IMR-90 (cell line): ENCODE measurements at regions of chr2 and their contacts with region 1.

Region 1: GRCh38 chr2:169109502-169110409 is 40.4 kb downstream of the DHRS9 start:
- DNase-seq: peak; percentile 62
- ATAC-seq: peak; percentile 84
- H3K4me3 ChIP-seq: no peak overlapping the region
- H3K27ac ChIP-seq: no peak overlapping the region
- H3K4me1 ChIP-seq: no peaks in the 10 kb centered on the region
- H3K27me3 ChIP-seq: no peaks in the 10 kb centered on the region
- CTCF ChIP-seq: peak; percentile 80
- POLR2A ChIP-seq: no peak
- RAD21 ChIP-seq: peak; percentile 69

Region 2: DNA sequence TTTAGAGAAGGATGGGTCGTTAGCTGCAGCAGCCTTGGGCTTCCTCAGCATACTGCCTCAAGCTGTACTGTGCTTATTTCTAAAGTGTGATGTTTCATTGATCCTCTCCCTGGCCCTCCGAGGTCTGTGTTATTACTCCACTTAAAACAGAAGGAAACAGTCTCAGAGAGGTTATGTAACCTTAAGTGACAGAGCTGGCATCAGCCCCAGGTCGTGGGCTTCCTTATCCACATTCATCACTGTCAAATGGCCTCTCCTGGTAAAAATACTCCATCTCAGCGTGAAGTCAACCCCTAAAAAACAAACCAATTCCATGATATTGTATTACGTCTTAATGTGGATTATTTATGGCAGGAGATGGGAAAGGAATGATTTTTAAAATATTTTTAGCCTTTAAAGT is 460.7 kb before region 1 on chr2:
- CTCF ChIA-PET with region 1: no interaction called
- POLR2A ChIA-PET with region 1: no interaction called
- dilution Hi-C with region 1: no loop called
- in situ Hi-C with region 1: no loop called
- intact Hi-C with region 1: no loop called
- DNase-seq: no peak
- ATAC-seq: no peak
- H3K4me3 ChIP-seq: no peak overlapping the region
- H3K27ac ChIP-seq: no peak overlapping the region
- H3K4me1 ChIP-seq: no peaks in the 10 kb centered on the region; the same call in 1 of the 2 replicates
- H3K27me3 ChIP-seq: no peaks in the 10 kb centered on the region
- CTCF ChIP-seq: no peak
- POLR2A ChIP-seq: no peak
- RAD21 ChIP-seq: no peak

Region 3: DNA sequence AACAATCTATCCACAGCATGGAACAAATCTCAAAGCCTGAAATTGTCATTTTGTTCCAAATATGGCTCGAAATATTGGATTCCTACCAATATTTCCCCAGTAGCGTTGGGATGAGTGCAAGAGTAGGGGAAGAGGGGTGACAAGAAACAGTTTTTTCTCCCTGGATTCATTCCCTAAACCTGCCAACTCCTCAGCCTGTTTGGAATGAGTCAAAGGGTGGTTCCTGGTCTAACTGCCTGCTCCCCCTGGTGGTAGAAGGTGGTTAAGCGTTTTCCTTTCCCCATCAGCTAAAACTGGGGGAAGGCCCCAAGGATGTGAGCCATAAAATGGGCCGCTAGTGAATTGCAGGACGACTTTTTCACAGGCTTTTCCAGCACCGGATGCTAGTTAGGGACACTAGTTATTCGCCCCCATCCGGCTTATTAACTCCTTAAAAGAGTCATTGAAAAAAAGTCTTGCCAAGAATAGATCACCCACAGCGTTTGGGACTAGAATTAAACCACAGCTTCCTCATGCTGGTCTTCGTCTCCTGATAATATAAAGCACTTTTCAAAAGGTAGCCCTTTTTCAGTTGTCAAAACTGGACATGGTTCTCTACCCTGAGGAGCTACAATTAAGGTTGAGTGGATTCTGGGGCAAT is 32.1 kb after region 1 on chr2:
- CTCF ChIA-PET with region 1: interaction called, 8 read pairs
- POLR2A ChIA-PET with region 1: no interaction called
- dilution Hi-C with region 1: no loop called
- in situ Hi-C with region 1: no loop called
- intact Hi-C with region 1: loop called (anchors 1 kb)
- DNase-seq: peak; percentile 53
- ATAC-seq: peak; percentile 88
- H3K4me3 ChIP-seq: no peak overlapping the region
- H3K27ac ChIP-seq: no peak overlapping the region
- H3K4me1 ChIP-seq: no peaks in the 10 kb centered on the region
- H3K27me3 ChIP-seq: no peaks in the 10 kb centered on the region
- CTCF ChIP-seq: peak; percentile 75
- POLR2A ChIP-seq: no peak
- RAD21 ChIP-seq: peak; percentile 38